ENCODE measurements at regions of chr14 and their contacts with region 1.

Region 1: DNA sequence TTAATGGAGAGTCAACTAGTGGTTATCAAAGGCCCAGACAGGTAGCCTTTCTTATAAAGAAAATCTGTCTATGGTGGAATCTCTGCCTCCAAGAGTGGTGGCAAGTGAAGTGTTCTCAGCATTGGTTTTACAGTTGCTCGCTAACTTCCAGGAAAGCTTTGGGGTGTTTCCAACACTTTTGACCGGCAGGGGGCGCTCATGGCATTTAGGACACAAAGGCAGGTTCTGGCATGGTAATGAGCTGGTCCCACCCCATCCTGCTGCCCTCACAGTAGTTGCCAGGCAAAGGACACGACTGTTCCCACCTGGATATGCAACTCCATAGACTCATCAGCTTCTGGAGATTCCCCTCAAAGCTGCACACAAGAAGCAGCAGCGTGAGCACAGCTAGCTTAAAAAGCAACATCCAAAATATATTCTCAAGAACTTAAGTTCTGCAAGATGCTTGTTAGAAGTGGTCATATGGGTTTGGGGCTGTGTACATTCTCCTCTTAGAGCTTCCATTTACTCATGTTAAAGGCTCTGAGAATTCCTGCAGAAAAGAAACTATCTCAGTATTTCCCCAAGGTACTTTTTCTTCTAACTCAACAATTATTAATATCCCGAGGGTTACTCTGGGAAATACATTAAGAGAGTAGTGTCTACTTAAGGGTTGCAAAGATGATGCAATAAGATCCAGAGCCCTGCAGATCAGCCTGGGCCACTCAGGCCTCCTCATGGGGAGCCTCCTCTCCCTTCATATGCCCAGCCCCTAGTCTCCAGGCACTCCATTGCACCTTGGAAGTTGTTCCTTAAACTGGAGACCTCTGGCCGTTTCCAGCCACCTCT is 14.8 kb downstream of the PROX2 start:
- DNase-seq: peak; percentile 94
- H3K4me3 Mint-ChIP-seq: no peak overlapping the region
- H3K27ac Mint-ChIP-seq: no peak overlapping the region
- H3K4me1 Mint-ChIP-seq: peaks cover under 1% of the 10 kb centered on the region
- H3K27me3 Mint-ChIP-seq: no peaks in the 10 kb centered on the region

Region 2: GRCh38 chr14:74595006-74595735 is 265.9 kb before region 1 on chr14:
- CTCF ChIA-PET with region 1: no interaction called
- POLR2A ChIA-PET with region 1: no interaction called
- intact Hi-C with region 1: no loop called
- DNase-seq: no peak
- H3K4me3 Mint-ChIP-seq: no peak overlapping the region
- H3K27ac Mint-ChIP-seq: no peak overlapping the region
- H3K4me1 Mint-ChIP-seq: no peaks in the 10 kb centered on the region
- H3K27me3 Mint-ChIP-seq: no peaks in the 10 kb centered on the region

Region 3: GRCh38 chr14:74841230-74842207 is 19.6 kb before region 1 on chr14:
- CTCF ChIA-PET with region 1: interaction called, 11 read pairs
- POLR2A ChIA-PET with region 1: interaction called, 3 read pairs
- intact Hi-C with region 1: no loop called
- DNase-seq: peak; percentile 49
- H3K4me3 Mint-ChIP-seq: no peak overlapping the region
- H3K27ac Mint-ChIP-seq: peak overlapping the region; percentile 83
- H3K4me1 Mint-ChIP-seq: peaks cover 55% of the 10 kb centered on the region
- H3K27me3 Mint-ChIP-seq: no peaks in the 10 kb centered on the region

Region 4: DNA sequence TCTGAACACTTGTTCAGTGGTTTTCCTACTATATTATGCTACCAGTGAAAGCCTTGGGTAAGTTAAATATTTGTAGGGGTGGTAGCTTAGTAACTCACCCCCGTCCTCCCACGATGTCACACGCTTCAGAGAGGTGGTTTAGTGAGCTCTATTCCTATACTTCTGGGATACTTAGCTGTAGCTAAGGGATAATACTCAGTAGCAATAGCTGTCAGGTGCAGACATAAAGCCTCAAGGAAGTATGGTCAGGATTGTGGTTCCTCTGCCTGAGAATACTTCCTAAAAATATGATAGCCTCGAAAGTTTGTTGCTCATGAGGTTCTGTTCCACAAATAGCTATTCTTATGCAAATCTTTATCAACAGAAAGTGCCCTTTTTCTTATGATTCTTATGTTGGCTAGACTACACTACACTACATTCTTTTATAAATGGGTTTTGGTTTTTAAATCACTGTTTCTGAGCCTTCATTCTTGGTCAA is 32.5 kb after region 1 on chr14:
- CTCF ChIA-PET with region 1: interaction called, 34 read pairs
- POLR2A ChIA-PET with region 1: no interaction called
- intact Hi-C with region 1: no loop called
- DNase-seq: no peak
- H3K4me3 Mint-ChIP-seq: no peak overlapping the region
- H3K27ac Mint-ChIP-seq: no peak overlapping the region
- H3K4me1 Mint-ChIP-seq: no peaks in the 10 kb centered on the region
- H3K27me3 Mint-ChIP-seq: no peaks in the 10 kb centered on the region

Region 5: GRCh38 chr14:74922739-74923401 is 61.8 kb after region 1 on chr14 and contains the start of gene RPS6KL1:
- CTCF ChIA-PET with region 1: interaction called, 13 read pairs
- POLR2A ChIA-PET with region 1: no interaction called
- intact Hi-C with region 1: no loop called
- DNase-seq: peak; percentile 82
- H3K4me3 Mint-ChIP-seq: peak within 1 kb of the TSS; percentile 57
- H3K27ac Mint-ChIP-seq: no peak within 1 kb of the TSS
- H3K4me1 Mint-ChIP-seq: peaks cover 8% of the 10 kb centered on the region
- H3K27me3 Mint-ChIP-seq: peaks cover 7% of the 10 kb centered on the region
- total RNA-seq, gene RPS6KL1: 4.2 to 4.9 TPM

Region 6: GRCh38 chr14:75063407-75064213 is 202.5 kb after region 1 on chr14 and contains the start of gene ACYP1:
- CTCF ChIA-PET with region 1: interaction called, 18 read pairs
- POLR2A ChIA-PET with region 1: no interaction called
- intact Hi-C with region 1: no loop called
- DNase-seq: peak; percentile 96
- H3K4me3 Mint-ChIP-seq: peak within 1 kb of the TSS; percentile 99
- H3K27ac Mint-ChIP-seq: peak within 1 kb of the TSS; percentile 95
- H3K4me1 Mint-ChIP-seq: peaks cover 37% of the 10 kb centered on the region
- H3K27me3 Mint-ChIP-seq: no peaks in the 10 kb centered on the region
- total RNA-seq, gene ACYP1: 41.3 to 45.8 TPM

Region 7: GRCh38 chr14:75088574-75089373 is 227.7 kb after region 1 on chr14:
- CTCF ChIA-PET with region 1: interaction called, 71 read pairs
- POLR2A ChIA-PET with region 1: no interaction called
- intact Hi-C with region 1: loop called (anchors 1 kb)
- DNase-seq: peak; percentile 23
- H3K4me3 Mint-ChIP-seq: no peak overlapping the region
- H3K27ac Mint-ChIP-seq: no peak overlapping the region
- H3K4me1 Mint-ChIP-seq: no peaks in the 10 kb centered on the region
- H3K27me3 Mint-ChIP-seq: no peaks in the 10 kb centered on the region